ENCODE measurements at regions of chr4 and their contacts with region 1.

Region 1: DNA sequence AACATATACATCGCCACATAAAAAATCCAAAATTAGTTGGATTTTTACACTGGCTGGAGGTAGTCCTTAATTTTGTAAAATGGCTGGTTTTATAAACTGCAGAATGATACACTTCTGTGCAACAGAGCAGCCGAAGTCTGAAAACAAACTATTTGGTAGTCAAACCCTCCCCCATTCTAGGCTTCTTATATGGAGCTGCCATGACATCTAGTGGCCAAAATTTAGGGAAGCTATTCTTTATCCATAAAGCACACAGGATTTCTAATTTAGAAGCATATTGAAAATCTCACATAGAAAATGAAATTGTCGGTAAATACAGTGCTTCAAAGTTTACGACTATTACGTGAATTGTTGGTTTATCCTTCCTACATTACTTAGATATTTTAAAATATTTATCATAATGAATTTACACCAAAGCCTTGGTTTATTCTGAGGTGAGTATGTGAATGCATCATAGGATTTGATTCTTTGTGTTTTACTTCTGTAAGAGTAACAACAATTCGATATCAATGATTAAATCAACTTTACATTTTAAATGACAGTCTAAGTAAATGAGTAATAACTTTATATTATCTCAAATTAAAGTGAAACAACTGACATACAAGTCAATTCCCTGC is 113.4 kb upstream of the FAM241A start:
- DNase-seq: peak; percentile 29
- H3K4me3 ChIP-seq: no peak overlapping the region
- H3K27ac ChIP-seq: no peak overlapping the region
- H3K4me1 ChIP-seq: no peaks in the 10 kb centered on the region
- CTCF ChIP-seq: peak; percentile 83

Region 2: DNA sequence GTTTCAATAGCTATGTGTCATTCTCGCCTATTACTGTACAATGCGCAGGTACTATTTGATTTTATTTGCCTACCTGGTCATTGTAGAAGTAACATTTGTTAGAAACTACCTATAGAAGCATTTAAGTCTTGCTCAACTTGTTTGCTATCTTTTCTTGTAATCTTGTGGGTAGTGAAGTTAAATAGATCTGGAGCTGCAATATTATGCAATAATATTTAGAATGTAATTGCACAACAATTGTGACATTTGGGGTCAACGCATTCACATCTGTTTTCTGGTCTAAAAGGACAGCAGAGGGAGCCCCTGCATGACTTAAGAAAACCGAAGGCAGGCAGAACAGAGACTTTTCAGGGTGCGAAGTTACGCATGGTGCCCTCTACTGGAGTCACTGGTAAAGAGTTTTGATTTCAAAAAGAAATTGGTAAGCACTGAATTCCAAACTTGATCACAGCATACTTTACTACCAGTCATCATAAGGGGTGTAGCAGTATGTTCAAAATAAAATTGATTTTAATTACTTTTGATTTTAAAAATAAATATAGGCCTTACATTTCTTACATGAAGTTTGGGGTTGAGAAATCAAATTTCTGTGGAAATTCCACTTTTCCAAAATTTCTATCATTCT is 389.8 kb before region 1 on chr4:
- CTCF ChIA-PET with region 1: no interaction called
- POLR2A ChIA-PET with region 1: interaction called, 3 read pairs
- intact Hi-C with region 1: loop called (anchors 1 kb)
- DNase-seq: peak; percentile 81
- H3K4me3 ChIP-seq: no peak overlapping the region
- H3K27ac ChIP-seq: no peak overlapping the region
- H3K4me1 ChIP-seq: no peaks in the 10 kb centered on the region
- CTCF ChIP-seq: peak; percentile 98

Region 3: DNA sequence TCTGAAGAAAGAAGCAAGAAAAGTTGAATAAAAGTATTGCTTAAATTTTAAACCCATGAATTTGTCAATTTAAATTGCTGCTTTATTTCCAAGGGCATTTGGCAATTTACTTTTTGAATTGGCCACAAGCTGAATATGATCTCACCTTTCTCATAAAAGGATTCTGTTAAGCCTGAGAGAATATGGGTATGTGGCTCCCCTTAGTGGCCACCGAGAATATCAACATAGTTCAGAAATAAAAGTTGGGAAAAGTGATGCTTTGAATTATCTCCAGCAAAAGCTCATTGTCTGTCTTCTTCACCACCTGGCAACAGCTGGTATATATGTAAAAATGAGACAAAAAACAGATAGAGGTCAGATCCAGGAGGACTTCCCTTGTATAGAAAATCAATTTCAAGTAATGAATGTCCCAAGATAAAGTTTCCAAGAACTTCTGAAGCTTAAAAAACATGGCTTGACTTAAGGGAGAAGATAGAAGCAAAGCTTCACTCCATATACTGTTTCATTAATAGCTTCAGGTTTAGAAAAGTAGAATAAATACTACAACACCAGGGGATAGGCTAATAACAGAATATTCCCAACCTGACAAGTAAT is 177.2 kb before region 1 on chr4:
- CTCF ChIA-PET with region 1: no interaction called
- POLR2A ChIA-PET with region 1: no interaction called
- intact Hi-C with region 1: loop called (anchors 5 kb)
- DNase-seq: peak; percentile 18
- H3K4me3 ChIP-seq: no peak overlapping the region
- H3K27ac ChIP-seq: no peak overlapping the region
- H3K4me1 ChIP-seq: no peaks in the 10 kb centered on the region
- CTCF ChIP-seq: peak; percentile 90

Region 4: GRCh38 chr4:111943795-111944203 is 88.0 kb before region 1 on chr4:
- CTCF ChIA-PET with region 1: no interaction called
- POLR2A ChIA-PET with region 1: no interaction called
- intact Hi-C with region 1: loop called (anchors 5 kb)
- DNase-seq: peak; percentile 20
- H3K4me3 ChIP-seq: no peak overlapping the region
- H3K27ac ChIP-seq: no peak overlapping the region
- H3K4me1 ChIP-seq: no peaks in the 10 kb centered on the region
- CTCF ChIP-seq: peak; percentile 64

Region 5: GRCh38 chr4:112145326-112145819 is 113.6 kb after region 1 on chr4 and contains the start of gene FAM241A:
- CTCF ChIA-PET with region 1: no interaction called
- POLR2A ChIA-PET with region 1: no interaction called
- intact Hi-C with region 1: no loop called
- DNase-seq: peak; percentile 92
- H3K4me3 ChIP-seq: peak within 1 kb of the TSS; percentile 75
- H3K27ac ChIP-seq: peak within 1 kb of the TSS; percentile 44
- H3K4me1 ChIP-seq: peaks cover 40% of the 10 kb centered on the region
- CTCF ChIP-seq: no peak
- total RNA-seq, gene FAM241A: 2.1 and 2.5 TPM in 2 replicates

Measured in OCI-LY7 (cell line).